ENCODE measurements at regions of chr3 and their contacts with region 1.

Region 1: GRCh38 chr3:122548076-122548475 is 16.0 kb downstream of the PARP9 start:
- DNase-seq: no peak
- H3K4me3 ChIP-seq: no peak overlapping the region
- H3K27ac ChIP-seq: no peak overlapping the region
- H3K4me1 ChIP-seq: peaks cover 0 to 3% (median 0%) of the 10 kb centered on the region in 4 experiments; a peak in 1 of 7 replicates
- H3K27me3 ChIP-seq: no peaks in the 10 kb centered on the region
- CTCF ChIP-seq: no peak
- EP300 ChIP-seq: no peak
- POLR2A ChIP-seq: no peak
- RAD21 ChIP-seq: no peak

Region 2: DNA sequence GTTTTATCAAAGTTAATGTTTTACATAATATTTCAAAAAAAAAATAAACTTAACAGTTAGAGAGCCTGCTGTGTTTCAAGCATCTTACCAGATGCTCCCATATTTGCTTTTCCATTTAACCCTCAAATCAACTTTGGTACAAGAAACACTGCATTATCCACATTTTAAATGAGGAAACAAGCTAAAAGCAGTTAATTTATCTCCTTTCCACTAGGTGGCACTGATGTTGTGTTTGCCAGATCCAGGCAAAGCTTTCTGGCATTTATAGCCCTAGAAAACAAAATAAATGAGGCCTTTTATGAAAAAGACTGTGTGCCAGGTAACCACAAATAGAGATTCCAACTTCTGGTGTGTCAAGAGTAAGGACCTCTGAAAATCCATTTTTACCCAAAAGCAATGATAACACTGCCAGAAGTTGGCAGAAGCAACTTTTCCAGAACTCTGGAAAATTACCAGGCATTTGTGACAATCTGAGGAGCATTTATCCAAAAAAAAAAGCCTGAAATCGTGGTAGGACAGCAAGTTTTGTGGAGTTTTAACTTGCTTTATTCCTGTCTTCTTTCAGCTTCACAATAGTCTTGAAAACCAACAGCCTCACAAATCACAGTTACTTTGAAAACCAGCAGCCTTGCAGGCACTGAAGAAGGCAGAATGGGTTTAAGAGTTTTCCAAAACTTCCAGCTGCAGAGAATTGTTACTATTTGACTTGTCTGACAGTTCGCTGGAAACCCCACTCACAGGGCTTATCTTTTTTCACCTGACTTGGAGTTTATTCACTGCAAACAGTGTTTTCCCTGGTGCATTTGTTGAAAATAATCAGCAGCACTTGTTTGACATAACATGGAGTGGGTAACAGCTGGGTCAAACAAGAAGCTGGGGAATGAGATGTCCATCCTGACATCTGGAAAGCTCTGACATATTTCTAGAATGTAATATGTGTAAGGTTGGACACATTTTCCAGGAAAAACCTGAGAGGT is 154.9 kb before region 1 on chr3:
- CTCF ChIA-PET with region 1: no interaction called
- POLR2A ChIA-PET with region 1: no interaction called
- DNase-seq: no peak
- H3K4me3 ChIP-seq: no peak overlapping the region
- H3K27ac ChIP-seq: no peak overlapping the region
- H3K4me1 ChIP-seq: no peaks in the 10 kb centered on the region
- H3K27me3 ChIP-seq: no peaks in the 10 kb centered on the region
- CTCF ChIP-seq: peak in 2 of 3 experiments; percentile 54 to 64; a peak in 2 of 4 replicates
- EP300 ChIP-seq: no peak
- POLR2A ChIP-seq: no peak
- RAD21 ChIP-seq: peak; percentile 73 to 78

Region 3: DNA sequence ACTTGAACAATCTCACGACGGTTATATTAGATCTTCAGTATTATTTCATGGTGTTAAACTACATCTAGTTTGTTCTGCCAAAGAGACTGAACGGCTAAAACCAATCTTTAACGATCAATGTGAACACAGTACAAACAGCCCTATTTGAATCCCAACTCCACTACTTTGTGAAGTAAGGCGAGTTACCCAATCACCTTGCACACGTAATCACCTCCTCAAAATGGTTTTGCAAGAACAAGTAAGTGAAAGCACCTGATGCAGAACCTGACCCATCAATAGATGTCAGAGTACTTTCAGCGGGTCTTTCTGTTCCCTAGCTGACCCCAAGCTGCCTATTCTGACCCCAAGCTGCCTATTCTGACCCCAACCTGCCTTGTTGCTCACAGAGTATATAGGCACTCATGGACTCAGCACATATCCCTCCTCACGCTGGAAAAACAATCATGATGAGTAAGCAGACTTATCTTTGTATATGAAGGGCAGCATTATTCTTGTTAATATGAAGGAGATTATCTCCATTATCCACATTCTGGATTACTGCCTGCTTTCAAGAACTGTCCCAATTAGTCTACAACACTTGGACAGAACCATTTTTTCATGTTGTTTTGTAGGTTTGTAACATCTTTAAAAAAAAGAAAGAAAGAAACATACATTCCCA is 37.1 kb before region 1 on chr3:
- CTCF ChIA-PET with region 1: no interaction called
- POLR2A ChIA-PET with region 1: no interaction called
- DNase-seq: no peak
- H3K4me3 ChIP-seq: no peak overlapping the region
- H3K27ac ChIP-seq: no peak overlapping the region
- H3K4me1 ChIP-seq: peaks cover 0 to 10% (median 4%) of the 10 kb centered on the region in 4 experiments; a peak in 6 of 7 replicates
- H3K27me3 ChIP-seq: no peaks in the 10 kb centered on the region
- CTCF ChIP-seq: no peak
- EP300 ChIP-seq: no peak
- POLR2A ChIP-seq: no peak
- RAD21 ChIP-seq: no peak

Region 4: GRCh38 chr3:122533931-122534334 is 14.1 kb before region 1 on chr3:
- CTCF ChIA-PET with region 1: no interaction called
- POLR2A ChIA-PET with region 1: no interaction called
- DNase-seq: no peak
- H3K4me3 ChIP-seq: no peak overlapping the region
- H3K27ac ChIP-seq: no peak overlapping the region
- H3K4me1 ChIP-seq: peaks cover 0 to 7% (median 2%) of the 10 kb centered on the region in 4 experiments; a peak in 3 of 7 replicates
- H3K27me3 ChIP-seq: no peaks in the 10 kb centered on the region
- CTCF ChIP-seq: no peak
- EP300 ChIP-seq: no peak
- POLR2A ChIP-seq: no peak
- RAD21 ChIP-seq: no peak

Region 5: DNA sequence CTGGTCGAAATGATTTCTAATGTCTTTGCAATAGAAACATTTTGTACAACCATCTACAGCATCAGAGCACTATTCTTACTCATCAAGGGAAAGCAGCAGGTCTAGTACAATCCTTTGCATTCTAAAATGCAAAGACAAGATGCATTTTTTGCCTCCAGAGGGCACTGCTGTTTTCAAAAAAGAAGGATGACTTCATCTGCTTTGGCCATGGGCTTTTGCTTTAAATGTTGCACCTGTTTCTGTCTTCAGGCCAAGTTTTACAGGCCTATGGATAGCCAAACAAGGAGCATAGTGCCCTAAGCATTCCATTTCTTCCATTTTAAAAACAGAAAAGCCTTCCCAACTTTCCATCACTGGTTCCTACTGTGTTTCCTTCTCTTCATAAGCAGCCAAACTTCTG is 12.6 kb after region 1 on chr3:
- CTCF ChIA-PET with region 1: interaction called, 13 read pairs
- POLR2A ChIA-PET with region 1: interaction called, 3 read pairs
- DNase-seq: no peak
- H3K4me3 ChIP-seq: no peak overlapping the region
- H3K27ac ChIP-seq: no peak overlapping the region
- H3K4me1 ChIP-seq: peaks cover 4 to 5% (median 5%) of the 10 kb centered on the region in 4 experiments; a peak in 6 of 7 replicates
- H3K27me3 ChIP-seq: peaks cover 0 to 2% (median 0%) of the 10 kb centered on the region in 4 experiments; a peak in 2 of 7 replicates
- CTCF ChIP-seq: peak in 2 of 3 experiments; percentile 56 to 58; a peak in 3 of 4 replicates
- EP300 ChIP-seq: no peak
- POLR2A ChIP-seq: no peak
- RAD21 ChIP-seq: peak; percentile 74 to 78

Region 6: GRCh38 chr3:122621112-122621511 is 73.0 kb after region 1 on chr3:
- CTCF ChIA-PET with region 1: no interaction called
- POLR2A ChIA-PET with region 1: no interaction called
- DNase-seq: no peak
- H3K4me3 ChIP-seq: no peak overlapping the region
- H3K27ac ChIP-seq: no peak overlapping the region
- H3K4me1 ChIP-seq: no peaks in the 10 kb centered on the region
- H3K27me3 ChIP-seq: no peaks in the 10 kb centered on the region
- CTCF ChIP-seq: no peak
- EP300 ChIP-seq: no peak
- POLR2A ChIP-seq: no peak
- RAD21 ChIP-seq: no peak

Measured in H1 (cell line).